ENCODE measurements at regions of chr9 and their contacts with region 1.

Region 1: GRCh38 chr9:93945400-93946337 is 9.5 kb downstream of the BARX1 start:
- DNase-seq: no peak
- ATAC-seq: no peak; the same call in 1 of the 2 replicates
- H3K4me3 Mint-ChIP-seq: peak overlapping the region; percentile 69
- H3K27ac Mint-ChIP-seq: no peak overlapping the region
- H3K4me1 Mint-ChIP-seq: peaks cover 58% of the 10 kb centered on the region
- H3K27me3 Mint-ChIP-seq: peaks cover 99% of the 10 kb centered on the region
- CTCF ChIP-seq: no peak

Region 2: GRCh38 chr9:93697352-93698139 is 248.1 kb before region 1 on chr9:
- CTCF ChIA-PET with region 1: no interaction called
- POLR2A ChIA-PET with region 1: no interaction called
- DNase-seq: no peak
- ATAC-seq: no peak
- H3K4me3 Mint-ChIP-seq: no peak overlapping the region
- H3K27ac Mint-ChIP-seq: no peak overlapping the region
- H3K4me1 Mint-ChIP-seq: no peaks in the 10 kb centered on the region
- H3K27me3 Mint-ChIP-seq: no peaks in the 10 kb centered on the region
- CTCF ChIP-seq: no peak

Region 3: DNA sequence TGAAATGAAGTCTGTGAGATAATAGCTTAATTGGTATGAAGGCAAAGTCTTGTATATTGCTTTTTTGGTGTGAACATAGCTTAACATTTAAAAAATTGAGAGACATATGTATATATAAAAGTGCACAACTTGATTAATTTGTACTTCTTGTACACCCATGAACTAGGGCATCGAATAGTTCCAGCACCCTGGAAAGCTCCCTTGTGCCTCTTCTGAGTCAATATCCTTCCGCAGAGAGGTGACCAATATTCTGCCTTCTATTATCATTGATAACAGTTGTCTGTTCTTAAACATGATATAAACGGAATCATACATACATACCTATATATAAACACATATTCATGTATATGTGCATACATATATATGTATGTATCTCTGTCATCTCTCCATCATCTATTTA is 183.8 kb before region 1 on chr9:
- CTCF ChIA-PET with region 1: no interaction called
- POLR2A ChIA-PET with region 1: no interaction called
- DNase-seq: no peak
- ATAC-seq: no peak
- H3K4me3 Mint-ChIP-seq: no peak overlapping the region
- H3K27ac Mint-ChIP-seq: no peak overlapping the region
- H3K4me1 Mint-ChIP-seq: peaks cover 24% of the 10 kb centered on the region
- H3K27me3 Mint-ChIP-seq: peaks cover 7% of the 10 kb centered on the region
- CTCF ChIP-seq: no peak

Region 4: DNA sequence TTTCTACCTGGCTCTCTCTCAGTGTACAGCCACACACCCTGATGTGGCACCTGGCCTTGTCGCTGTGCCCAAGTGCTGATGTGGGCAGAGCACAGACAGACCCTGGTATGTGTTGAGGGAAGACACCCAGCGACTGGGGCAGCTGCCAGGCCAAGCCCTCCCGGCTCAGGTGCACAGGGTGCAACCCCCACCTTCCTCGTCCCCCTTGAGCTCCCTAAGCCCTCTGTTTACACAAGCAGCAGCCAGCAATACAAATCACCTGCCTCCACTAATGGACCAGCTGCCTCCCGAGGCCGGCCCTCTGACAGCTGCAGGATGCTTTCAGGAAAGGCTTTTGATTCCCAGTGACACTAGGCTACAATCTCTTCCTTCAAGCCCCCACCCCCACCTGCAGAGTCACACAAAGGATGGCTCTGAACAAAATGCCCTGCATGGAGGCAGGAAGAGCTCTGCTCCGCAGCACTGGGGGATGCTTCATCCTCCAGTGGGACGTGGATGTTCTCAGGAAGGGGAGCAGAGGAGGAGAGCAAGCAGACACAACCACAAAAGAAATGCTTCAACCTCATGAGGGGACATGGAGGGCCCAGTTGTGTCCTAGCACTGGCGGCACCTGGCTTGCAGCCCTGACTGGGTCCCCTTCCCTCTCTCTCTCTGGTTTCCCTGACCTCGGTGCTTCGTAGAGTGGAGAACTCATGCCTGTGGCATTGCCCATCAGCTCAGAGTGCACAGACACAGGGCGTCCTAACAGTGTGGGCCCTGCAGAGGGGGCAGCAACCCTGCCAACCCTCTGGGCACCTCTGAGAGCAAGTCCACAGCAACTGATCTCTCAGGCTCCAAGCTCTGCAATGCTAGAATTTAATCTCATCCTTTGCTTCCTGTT is 131.4 kb before region 1 on chr9:
- CTCF ChIA-PET with region 1: interaction called, 28 read pairs
- POLR2A ChIA-PET with region 1: no interaction called
- DNase-seq: no peak
- ATAC-seq: peak; percentile 59
- H3K4me3 Mint-ChIP-seq: no peak overlapping the region
- H3K27ac Mint-ChIP-seq: no peak overlapping the region
- H3K4me1 Mint-ChIP-seq: peaks cover 37% of the 10 kb centered on the region
- H3K27me3 Mint-ChIP-seq: no peaks in the 10 kb centered on the region
- CTCF ChIP-seq: no peak

Region 5: DNA sequence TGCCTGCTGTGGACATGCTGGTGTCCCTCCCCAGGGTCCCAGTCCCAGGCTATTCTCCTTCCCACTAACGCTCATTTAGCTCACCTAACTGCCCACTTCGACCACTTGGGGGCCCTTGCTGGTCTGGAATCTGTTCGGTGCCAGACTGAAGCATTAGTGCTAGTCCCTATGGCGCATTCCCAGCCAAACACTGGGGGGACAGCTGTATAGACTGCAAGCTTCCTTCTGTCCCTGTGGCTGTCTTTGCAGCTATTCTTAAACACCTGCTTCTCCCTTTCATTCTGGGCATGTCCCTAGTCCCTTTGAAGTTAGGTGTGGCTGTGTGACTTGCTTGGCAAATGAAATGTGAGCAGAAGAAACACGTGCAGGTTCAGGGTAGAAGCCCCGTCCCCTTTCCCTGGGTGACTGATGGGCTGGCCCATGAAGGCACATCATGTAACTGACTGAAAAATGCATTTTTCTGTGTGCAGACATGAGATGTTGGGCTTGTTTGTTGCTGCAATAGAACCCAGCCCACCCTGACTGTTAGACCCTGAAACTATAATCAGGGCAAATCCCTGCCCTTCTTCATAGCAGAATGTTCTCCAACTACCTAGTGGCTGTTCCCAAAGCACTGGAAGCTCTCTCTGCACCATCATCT is 124.9 kb before region 1 on chr9:
- CTCF ChIA-PET with region 1: interaction called, 157 read pairs
- POLR2A ChIA-PET with region 1: no interaction called
- DNase-seq: peak; percentile 60
- ATAC-seq: peak; percentile 94
- H3K4me3 Mint-ChIP-seq: no peak overlapping the region
- H3K27ac Mint-ChIP-seq: no peak overlapping the region
- H3K4me1 Mint-ChIP-seq: peaks cover under 1% of the 10 kb centered on the region; the same call in 1 of the 2 replicates
- H3K27me3 Mint-ChIP-seq: peaks cover 7% of the 10 kb centered on the region
- CTCF ChIP-seq: no peak

Region 6: DNA sequence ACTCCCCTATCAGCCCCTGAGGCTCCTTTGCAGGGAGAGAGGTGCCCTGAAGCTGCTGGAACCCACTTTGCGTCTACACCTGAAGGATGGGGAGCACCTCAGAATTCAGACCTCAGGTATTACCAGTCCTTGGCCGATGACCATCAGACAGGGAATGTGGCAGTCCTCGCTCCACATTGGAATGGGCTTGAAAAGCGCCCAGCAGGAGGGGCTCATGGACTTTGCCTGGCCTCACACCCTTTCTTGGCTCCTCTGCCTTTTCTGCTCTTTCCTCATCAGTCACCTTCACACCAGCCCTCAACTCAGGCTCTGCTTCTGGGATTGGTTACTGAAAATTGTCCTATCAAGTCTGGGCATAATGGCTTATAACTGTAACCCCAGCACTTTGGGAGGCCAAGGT is 74.4 kb before region 1 on chr9:
- CTCF ChIA-PET with region 1: no interaction called
- POLR2A ChIA-PET with region 1: no interaction called
- DNase-seq: no peak
- ATAC-seq: no peak
- H3K4me3 Mint-ChIP-seq: no peak overlapping the region
- H3K27ac Mint-ChIP-seq: no peak overlapping the region
- H3K4me1 Mint-ChIP-seq: peaks cover 11% of the 10 kb centered on the region
- H3K27me3 Mint-ChIP-seq: peaks cover 4% of the 10 kb centered on the region
- CTCF ChIP-seq: no peak

Region 7: GRCh38 chr9:94056442-94056974 is 110.8 kb after region 1 on chr9:
- CTCF ChIA-PET with region 1: no interaction called
- POLR2A ChIA-PET with region 1: no interaction called
- DNase-seq: no peak
- ATAC-seq: no peak
- H3K4me3 Mint-ChIP-seq: no peak overlapping the region
- H3K27ac Mint-ChIP-seq: no peak overlapping the region
- H3K4me1 Mint-ChIP-seq: no peaks in the 10 kb centered on the region
- H3K27me3 Mint-ChIP-seq: peaks cover under 1% of the 10 kb centered on the region; the same call in 1 of the 2 replicates
- CTCF ChIP-seq: no peak

Measured in WTC11 (cell line).